ENCODE measurements at regions of chr2 and their contacts with region 1.

Region 1: GRCh38 chr2:176814306-176815052 is 398.1 kb upstream of the HNRNPA3 start:
- DNase-seq: no peak
- ATAC-seq: peak; percentile 65
- H3K4me3 Mint-ChIP-seq: peak overlapping the region; percentile 21
- H3K27ac Mint-ChIP-seq: no peak overlapping the region
- H3K4me1 Mint-ChIP-seq: peaks cover 35% of the 10 kb centered on the region
- H3K27me3 Mint-ChIP-seq: no peaks in the 10 kb centered on the region

Region 2: GRCh38 chr2:176830362-176830761 is 15.9 kb after region 1 on chr2:
- CTCF ChIA-PET with region 1: interaction called, 10 read pairs
- DNase-seq: peak; percentile 54
- ATAC-seq: peak; percentile 37
- H3K4me3 Mint-ChIP-seq: no peak overlapping the region
- H3K27ac Mint-ChIP-seq: no peak overlapping the region
- H3K4me1 Mint-ChIP-seq: peaks cover 44% of the 10 kb centered on the region
- H3K27me3 Mint-ChIP-seq: no peaks in the 10 kb centered on the region

Region 3: DNA sequence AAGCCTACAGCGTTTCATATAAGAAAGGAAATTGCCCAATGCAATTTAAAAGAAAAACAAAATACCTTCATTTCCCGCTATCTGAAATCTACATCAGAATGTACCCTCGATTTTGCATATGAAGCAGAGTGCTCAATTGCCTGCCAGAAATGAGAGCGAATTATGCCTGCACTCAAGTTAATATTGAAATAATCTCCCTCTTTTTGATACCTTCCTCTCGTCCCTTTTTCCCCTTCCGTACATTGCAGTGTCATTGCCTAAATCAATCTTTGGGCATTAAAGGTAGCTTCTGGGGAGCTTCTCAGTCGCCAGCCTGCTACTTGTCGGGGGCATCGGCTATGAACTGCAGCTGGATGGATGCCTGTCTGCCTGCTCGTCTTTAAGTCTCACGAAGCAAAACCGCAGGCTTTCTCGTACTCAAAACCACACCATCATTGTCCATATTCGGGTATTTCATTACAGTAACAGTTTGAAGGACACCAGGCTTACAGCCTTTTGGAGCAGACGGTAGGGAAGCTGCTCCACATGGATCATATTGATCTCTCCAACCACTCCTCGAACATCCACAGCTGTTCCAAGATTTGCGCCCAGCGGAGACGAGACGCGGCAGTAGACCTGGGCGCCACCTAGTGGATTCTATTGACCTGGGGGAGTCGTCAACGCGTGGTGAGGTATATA is 334.1 kb after region 1 on chr2:
- CTCF ChIA-PET with region 1: interaction called, 34 read pairs
- DNase-seq: peak; percentile 86
- ATAC-seq: peak; percentile 97
- H3K4me3 Mint-ChIP-seq: peak overlapping the region; percentile 88
- H3K27ac Mint-ChIP-seq: peak overlapping the region; percentile 67
- H3K4me1 Mint-ChIP-seq: peaks cover 25% of the 10 kb centered on the region
- H3K27me3 Mint-ChIP-seq: peaks cover 61% of the 10 kb centered on the region